Sigmoid colon (tissue), 7 donors: ENCODE measurements at regions of chr15 and their contacts with region 1.

Region 1: GRCh38 chr15:45037936-45038335 is 14.9 kb downstream of the SORD start:
- DNase-seq: no peak
- H3K4me3 ChIP-seq: no peak overlapping the region
- H3K27ac ChIP-seq: no peak overlapping the region
- H3K4me1 ChIP-seq: peaks cover 0 to 7% (median 4%) of the 10 kb centered on the region in 4 donors
- H3K27me3 ChIP-seq: no peaks in the 10 kb centered on the region
- CTCF ChIP-seq: no peak
- EP300 ChIP-seq: no peak
- POLR2A ChIP-seq: no peak

Region 2: GRCh38 chr15:44968475-44968874 is 69.5 kb before region 1 on chr15:
- intact Hi-C with region 1: loop called (anchors 5 kb)
- DNase-seq: no peak
- H3K4me3 ChIP-seq: no peak overlapping the region
- H3K27ac ChIP-seq: no peak overlapping the region
- H3K4me1 ChIP-seq: no peaks in the 10 kb centered on the region
- H3K27me3 ChIP-seq: no peaks in the 10 kb centered on the region
- CTCF ChIP-seq: no peak
- EP300 ChIP-seq: no peak
- POLR2A ChIP-seq: no peak